CD4-positive, alpha-beta memory T cell (primary cell): ENCODE measurements at regions of chr6 and their contacts with region 1.

Region 1: DNA sequence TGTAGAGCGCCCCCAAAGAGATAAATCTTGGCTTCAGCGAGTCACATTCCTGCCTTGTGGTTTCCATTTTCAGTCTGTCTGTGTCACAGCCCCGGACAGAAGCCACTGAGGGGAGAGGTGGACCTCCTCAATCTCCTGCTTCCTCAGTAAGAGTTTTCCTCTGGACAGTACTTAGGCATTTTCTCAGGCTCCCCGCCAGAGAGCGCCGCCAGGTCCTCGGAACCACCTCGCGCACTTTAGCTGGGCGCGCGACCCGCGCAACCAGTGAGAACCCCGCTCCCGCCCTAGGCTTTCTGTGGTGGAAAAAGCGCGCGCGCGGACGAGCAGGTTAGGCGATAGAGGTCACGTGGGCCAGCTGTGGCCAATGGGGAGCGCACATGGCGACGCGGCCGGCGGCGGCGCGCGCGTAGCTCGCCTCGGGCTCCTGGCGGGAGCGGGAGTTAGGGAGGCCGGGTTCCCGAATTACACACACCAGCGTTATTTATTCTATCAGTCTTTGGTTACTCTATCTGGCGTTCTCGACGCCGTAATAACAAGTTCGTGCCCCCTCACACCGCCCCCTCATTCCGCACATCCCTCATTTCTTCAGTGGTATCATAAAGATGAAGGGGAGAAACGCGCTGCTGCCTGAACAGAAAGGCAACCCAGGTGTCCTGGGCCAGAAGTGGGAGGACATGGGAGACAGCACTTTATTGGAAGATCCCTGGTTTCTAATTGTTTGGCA is 19.4 kb downstream of the PXT1 start:
- DNase-seq: peak; percentile 97 to 99 (median 97)
- H3K4me3 ChIP-seq: peak overlapping the region; percentile 69 to 85
- H3K4me3 Mint-ChIP-seq: peak overlapping the region; percentile 91 to 95 (median 93)
- H3K27ac ChIP-seq: peak overlapping the region; percentile 68
- H3K27ac Mint-ChIP-seq: peak overlapping the region; percentile 73 to 97 (median 95)
- H3K4me1 ChIP-seq: peaks cover 15% of the 10 kb centered on the region
- H3K4me1 Mint-ChIP-seq: peaks cover 10 to 19% (median 14%) of the 10 kb centered on the region in 4 donors
- H3K27me3 ChIP-seq: no peaks in the 10 kb centered on the region
- H3K27me3 Mint-ChIP-seq: no peaks in the 10 kb centered on the region

Region 2: DNA sequence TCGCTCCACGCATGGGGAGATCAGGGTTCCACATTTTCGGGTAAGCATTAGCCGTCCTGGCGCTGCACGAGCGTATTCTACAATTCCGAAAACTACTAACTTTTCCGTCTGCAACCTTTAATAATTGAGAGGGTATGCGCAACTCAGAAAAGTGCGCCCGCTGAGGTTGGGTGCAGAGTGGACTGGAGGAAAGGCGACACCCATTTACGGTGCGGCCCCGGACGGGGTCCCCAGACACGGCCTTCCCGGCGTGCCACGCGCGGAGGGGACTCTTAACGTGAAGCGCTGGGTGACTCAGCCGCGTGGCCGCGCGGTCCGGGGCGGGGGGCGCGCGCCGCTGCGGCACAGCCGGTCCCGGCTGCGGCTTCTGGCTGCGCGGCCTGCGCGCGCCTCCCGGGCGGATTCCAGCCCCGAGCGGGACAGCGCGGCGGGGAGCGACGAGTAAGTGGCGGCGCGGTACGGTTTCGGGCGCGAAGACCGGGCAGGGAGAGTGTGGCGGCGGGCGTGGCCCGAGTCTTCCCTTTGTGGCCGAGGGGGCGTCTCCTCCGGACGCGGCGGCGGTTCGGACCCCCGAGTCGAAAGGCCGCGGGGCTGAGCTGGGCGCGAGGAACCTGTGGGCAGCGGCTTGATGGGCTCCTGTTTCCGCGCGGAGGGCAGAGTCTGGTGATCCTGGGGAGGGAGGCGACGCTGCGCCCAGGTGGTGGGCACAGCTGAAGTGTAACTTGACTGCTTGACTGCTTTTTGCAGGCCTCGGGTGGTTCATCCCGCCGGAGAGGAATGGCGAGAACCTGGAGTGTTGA is 19.6 kb after region 1 on chr6 and contains the starts of genes KCTD20 and PXT1:
- CTCF ChIA-PET with region 1: interaction called, 9 read pairs
- POLR2A ChIA-PET with region 1: interaction called, 42 read pairs
- intact Hi-C with region 1: loop called (anchors 1 kb)
- DNase-seq: peak; percentile 83 to 86 (median 85)
- H3K4me3 ChIP-seq: peak within 1 kb of the TSS; percentile 85 to 96
- H3K4me3 Mint-ChIP-seq: peak within 1 kb of the TSS; percentile 92 to 99 (median 97)
- H3K27ac ChIP-seq: peak within 1 kb of the TSS; percentile 92
- H3K27ac Mint-ChIP-seq: peak within 1 kb of the TSS; percentile 87 to 99 (median 99)
- H3K4me1 ChIP-seq: peaks cover 53% of the 10 kb centered on the region
- H3K4me1 Mint-ChIP-seq: peaks cover 27 to 61% (median 42%) of the 10 kb centered on the region in 4 donors
- H3K27me3 ChIP-seq: no peaks in the 10 kb centered on the region
- H3K27me3 Mint-ChIP-seq: no peaks in the 10 kb centered on the region
- total RNA-seq, gene KCTD20: 35.2 to 38.9 TPM
- total RNA-seq, gene PXT1: 0.25 TPM in 1 of 2 experiments, not detected in the other

Region 3: GRCh38 chr6:36463676-36464075 is 40.4 kb after region 1 on chr6:
- CTCF ChIA-PET with region 1: interaction called, 11 read pairs
- POLR2A ChIA-PET with region 1: interaction called, 4 read pairs
- intact Hi-C with region 1: loop called (anchors 5 kb)
- DNase-seq: no peak
- H3K4me3 ChIP-seq: no peak overlapping the region
- H3K4me3 Mint-ChIP-seq: no peak overlapping the region
- H3K27ac ChIP-seq: no peak overlapping the region
- H3K27ac Mint-ChIP-seq: no peak overlapping the region
- H3K4me1 ChIP-seq: peaks cover 25% of the 10 kb centered on the region
- H3K4me1 Mint-ChIP-seq: peaks cover 30 to 54% (median 41%) of the 10 kb centered on the region in 4 donors
- H3K27me3 ChIP-seq: no peaks in the 10 kb centered on the region
- H3K27me3 Mint-ChIP-seq: no peaks in the 10 kb centered on the region

Region 4: DNA sequence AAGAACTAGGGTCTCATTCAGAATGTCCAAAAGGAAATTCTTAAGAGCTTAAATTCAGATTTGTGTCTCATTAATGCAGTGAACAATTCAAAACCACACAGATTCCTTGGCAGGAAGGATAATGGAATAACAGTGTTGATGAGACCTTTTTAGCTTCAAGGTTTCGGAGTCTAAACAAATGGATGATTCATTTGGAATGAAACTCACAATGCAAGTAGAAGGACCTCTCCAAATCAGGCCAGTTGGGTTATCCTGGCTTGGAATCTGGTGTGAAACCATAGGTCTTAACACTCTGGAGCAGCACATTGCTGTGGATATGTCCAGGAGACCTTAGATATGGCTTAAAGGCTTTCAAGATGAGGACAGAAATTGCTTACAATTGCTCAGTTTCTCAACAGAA is 64.4 kb after region 1 on chr6:
- CTCF ChIA-PET with region 1: interaction called, 11 read pairs
- POLR2A ChIA-PET with region 1: no interaction called
- intact Hi-C with region 1: loop called (anchors 5 kb)
- DNase-seq: no peak
- H3K4me3 ChIP-seq: no peak overlapping the region
- H3K4me3 Mint-ChIP-seq: no peak overlapping the region
- H3K27ac ChIP-seq: no peak overlapping the region
- H3K27ac Mint-ChIP-seq: peak overlapping the region in 3 of 7 donors; percentile 7 to 44 (median 9)
- H3K4me1 ChIP-seq: no peaks in the 10 kb centered on the region
- H3K4me1 Mint-ChIP-seq: peaks cover 6 to 35% (median 9%) of the 10 kb centered on the region in 4 donors
- H3K27me3 ChIP-seq: no peaks in the 10 kb centered on the region
- H3K27me3 Mint-ChIP-seq: no peaks in the 10 kb centered on the region

Region 5: GRCh38 chr6:36504982-36505381 is 81.7 kb after region 1 on chr6:
- CTCF ChIA-PET with region 1: interaction called, 5 read pairs
- POLR2A ChIA-PET with region 1: no interaction called
- intact Hi-C with region 1: loop called (anchors 5 kb)
- DNase-seq: no peak
- H3K4me3 ChIP-seq: no peak overlapping the region
- H3K4me3 Mint-ChIP-seq: peak overlapping the region in 1 of 8 donors; percentile 30
- H3K27ac ChIP-seq: no peak overlapping the region
- H3K27ac Mint-ChIP-seq: peak overlapping the region in 5 of 7 donors; percentile 36 to 91 (median 56)
- H3K4me1 ChIP-seq: peaks cover 33% of the 10 kb centered on the region
- H3K4me1 Mint-ChIP-seq: peaks cover 31 to 50% (median 42%) of the 10 kb centered on the region in 4 donors
- H3K27me3 ChIP-seq: no peaks in the 10 kb centered on the region
- H3K27me3 Mint-ChIP-seq: no peaks in the 10 kb centered on the region

Region 6: GRCh38 chr6:36546920-36547645 is 123.8 kb after region 1 on chr6 and contains the start of gene STK38:
- CTCF ChIA-PET with region 1: interaction called, 4 read pairs
- POLR2A ChIA-PET with region 1: interaction called, 3 read pairs
- intact Hi-C with region 1: loop called (anchors 1 kb)
- DNase-seq: peak; percentile 85 to 90 (median 87)
- H3K4me3 ChIP-seq: peak within 1 kb of the TSS; percentile 89 to 99
- H3K4me3 Mint-ChIP-seq: peak within 1 kb of the TSS; percentile 94 to 100 (median 100)
- H3K27ac ChIP-seq: peak within 1 kb of the TSS; percentile 92
- H3K27ac Mint-ChIP-seq: peak within 1 kb of the TSS; percentile 94 to 99 (median 98)
- H3K4me1 ChIP-seq: peaks cover 48% of the 10 kb centered on the region
- H3K4me1 Mint-ChIP-seq: peaks cover 23 to 65% (median 39%) of the 10 kb centered on the region in 4 donors
- H3K27me3 ChIP-seq: no peaks in the 10 kb centered on the region
- H3K27me3 Mint-ChIP-seq: no peaks in the 10 kb centered on the region
- total RNA-seq, gene STK38: 186 to 190 TPM

Region 7: GRCh38 chr6:36576561-36576960 is 153.3 kb after region 1 on chr6:
- CTCF ChIA-PET with region 1: interaction called, 25 read pairs
- POLR2A ChIA-PET with region 1: interaction called, 4 read pairs
- intact Hi-C with region 1: loop called (anchors 1 kb)
- DNase-seq: no peak
- H3K4me3 ChIP-seq: no peak overlapping the region
- H3K4me3 Mint-ChIP-seq: no peak overlapping the region
- H3K27ac ChIP-seq: no peak overlapping the region
- H3K27ac Mint-ChIP-seq: no peak overlapping the region
- H3K4me1 ChIP-seq: no peaks in the 10 kb centered on the region
- H3K4me1 Mint-ChIP-seq: peaks cover 4 to 10% (median 7%) of the 10 kb centered on the region in 4 donors
- H3K27me3 ChIP-seq: no peaks in the 10 kb centered on the region
- H3K27me3 Mint-ChIP-seq: no peaks in the 10 kb centered on the region

Region 8: GRCh38 chr6:36739947-36740817 is 316.9 kb after region 1 on chr6:
- CTCF ChIA-PET with region 1: no interaction called
- POLR2A ChIA-PET with region 1: no interaction called
- intact Hi-C with region 1: no loop called
- DNase-seq: no peak
- H3K4me3 ChIP-seq: no peak overlapping the region
- H3K4me3 Mint-ChIP-seq: no peak overlapping the region
- H3K27ac ChIP-seq: no peak overlapping the region
- H3K27ac Mint-ChIP-seq: peak overlapping the region in 1 of 7 donors; percentile 27
- H3K4me1 ChIP-seq: peaks cover 26% of the 10 kb centered on the region
- H3K4me1 Mint-ChIP-seq: peaks cover 6 to 26% (median 12%) of the 10 kb centered on the region in 4 donors
- H3K27me3 ChIP-seq: no peaks in the 10 kb centered on the region
- H3K27me3 Mint-ChIP-seq: no peaks in the 10 kb centered on the region